OCI-LY7 (cell line): ENCODE measurements at regions of chr13 and their contacts with region 1.

Region 1: DNA sequence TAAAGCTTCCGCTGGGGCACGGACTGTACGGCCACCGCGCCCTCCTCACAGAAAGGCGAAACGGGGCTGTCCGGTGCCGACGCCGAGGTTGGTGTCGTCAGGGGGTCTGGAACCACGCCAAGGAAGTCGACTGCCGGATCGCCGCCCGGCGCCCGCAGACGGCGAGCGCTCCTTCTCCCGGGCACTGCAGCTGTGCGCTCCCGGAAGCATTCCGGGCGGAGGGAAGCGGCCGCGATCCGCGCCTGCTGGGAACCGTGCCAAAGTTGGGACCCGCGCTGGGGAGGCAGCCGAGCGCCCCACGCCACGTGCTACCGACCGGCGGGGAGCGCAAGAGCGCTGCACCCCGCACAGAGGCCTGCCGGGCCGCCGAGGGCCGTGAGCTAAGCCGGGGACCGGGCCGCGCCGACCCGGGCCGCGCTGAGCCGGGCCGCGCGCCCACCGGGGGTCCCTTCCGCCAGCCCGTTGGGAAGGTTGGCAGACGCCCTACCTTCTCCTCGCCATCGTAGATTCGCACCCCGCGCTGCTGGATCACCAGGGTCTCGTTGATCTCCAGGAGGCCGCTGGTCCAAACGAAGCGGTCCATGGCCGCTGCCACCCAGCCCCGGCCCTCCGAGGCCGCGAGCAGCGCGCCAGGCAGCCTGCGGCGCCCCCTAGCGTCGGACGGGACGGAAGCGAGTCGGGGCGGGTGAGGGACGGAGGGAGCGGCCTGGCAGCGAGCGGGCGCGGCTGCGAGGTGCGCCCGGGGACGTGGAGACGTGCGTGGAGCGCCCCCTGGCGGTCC is at the start of gene VPS36:
- DNase-seq: peak; percentile 95
- H3K4me3 ChIP-seq: peak within 1 kb of the TSS; percentile 75
- H3K27ac ChIP-seq: peak within 1 kb of the TSS; percentile 34
- H3K4me1 ChIP-seq: peaks cover 28% of the 10 kb centered on the region
- CTCF ChIP-seq: peak; percentile 91
- total RNA-seq, gene VPS36: 26.5 and 35.9 TPM in 2 replicates

Region 2: DNA sequence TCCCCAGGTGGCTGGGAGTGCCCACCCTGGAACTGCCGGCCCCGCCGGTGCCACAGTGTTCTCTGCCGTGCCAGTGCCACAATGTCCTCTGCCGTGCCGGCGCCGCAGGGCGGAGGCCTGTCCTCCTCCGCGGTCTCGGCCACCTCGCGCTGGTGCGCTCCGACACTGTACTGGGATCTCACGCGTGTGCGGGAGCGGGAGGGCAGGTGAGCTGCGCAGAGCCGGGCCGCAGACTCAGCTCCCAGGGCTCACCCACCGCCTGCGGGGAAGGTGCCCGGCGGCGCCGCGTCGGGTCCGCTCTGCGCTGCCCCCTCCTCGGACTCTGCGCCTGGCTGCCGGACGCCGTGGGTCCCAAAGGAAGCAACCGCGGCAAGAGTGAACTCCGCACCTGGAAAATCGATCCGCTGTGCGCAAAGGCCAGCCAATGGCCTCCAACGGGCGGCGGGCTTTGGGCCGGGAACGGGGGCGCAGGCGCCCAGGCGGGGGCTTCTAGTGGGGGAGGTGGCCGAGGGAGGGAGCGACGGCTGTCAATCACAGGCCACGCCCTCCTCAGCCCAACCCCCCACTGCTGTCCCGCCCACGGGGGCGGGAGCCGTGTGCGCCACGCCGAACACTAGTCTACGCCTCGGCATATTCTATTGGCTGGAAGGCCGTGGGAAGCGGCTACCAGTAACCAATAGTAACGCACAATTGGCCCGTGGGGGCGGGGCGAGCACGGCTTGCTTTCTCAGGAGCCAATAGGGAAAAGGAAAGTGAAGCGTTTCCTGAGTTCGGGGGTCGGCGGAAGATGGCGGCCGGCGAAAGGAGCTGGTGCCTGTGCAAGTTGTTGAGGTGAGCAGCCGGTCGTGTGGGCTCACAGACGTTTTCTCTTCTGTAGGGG is 438.3 kb before region 1 on chr13 and contains the start of gene ALG11:
- CTCF ChIA-PET with region 1: no interaction called
- POLR2A ChIA-PET with region 1: no interaction called
- intact Hi-C with region 1: loop called (anchors 2 kb)
- DNase-seq: peak; percentile 99
- H3K4me3 ChIP-seq: peak within 1 kb of the TSS; percentile 95
- H3K27ac ChIP-seq: no peak within 1 kb of the TSS
- H3K4me1 ChIP-seq: peaks cover 16% of the 10 kb centered on the region
- CTCF ChIP-seq: no peak
- total RNA-seq, gene ALG11: 11.6 and 14.1 TPM in 2 replicates

Region 3: DNA sequence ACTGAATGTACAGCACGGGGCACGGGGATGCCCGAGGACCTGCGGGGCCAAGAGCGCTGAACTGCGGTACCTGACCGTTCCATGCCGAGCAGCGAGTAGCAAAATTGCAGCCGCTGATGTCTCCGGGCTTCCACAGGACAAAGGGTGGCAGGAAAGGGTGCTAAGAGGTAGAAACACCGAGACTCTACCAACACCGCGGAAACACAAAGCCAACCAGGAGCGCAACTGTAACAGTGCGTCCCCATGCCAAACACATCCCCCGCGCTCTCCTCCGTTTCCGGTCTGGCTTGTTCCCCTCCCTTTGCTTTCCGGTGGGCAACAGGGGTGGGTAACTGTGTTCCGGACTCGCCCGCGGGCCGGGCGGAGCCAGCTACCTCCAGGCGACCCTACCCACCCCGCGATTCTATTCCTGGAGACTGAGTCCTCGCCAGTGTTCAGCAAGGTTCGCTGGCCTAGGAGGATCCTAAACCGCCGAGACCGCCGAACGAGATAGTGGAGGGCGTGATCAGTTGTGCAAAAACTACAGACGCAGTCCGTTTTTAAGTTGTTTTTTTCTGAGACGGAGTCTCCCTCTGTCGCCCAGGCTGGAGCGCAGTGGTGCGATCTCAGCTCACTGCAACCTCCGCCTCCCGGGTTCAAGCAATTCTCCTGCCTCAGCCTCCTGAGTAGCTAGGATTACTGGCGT is 255.9 kb before region 1 on chr13:
- CTCF ChIA-PET with region 1: no interaction called
- POLR2A ChIA-PET with region 1: no interaction called
- intact Hi-C with region 1: loop called (anchors 10 kb)
- DNase-seq: peak; percentile 89
- H3K4me3 ChIP-seq: peak overlapping the region; percentile 94
- H3K27ac ChIP-seq: peak overlapping the region; percentile 71
- H3K4me1 ChIP-seq: peaks cover 13% of the 10 kb centered on the region
- CTCF ChIP-seq: no peak

Region 4: GRCh38 chr13:52428295-52428694 is 21.9 kb before region 1 on chr13:
- CTCF ChIA-PET with region 1: no interaction called
- POLR2A ChIA-PET with region 1: no interaction called
- intact Hi-C with region 1: no loop called
- DNase-seq: no peak
- H3K4me3 ChIP-seq: no peak overlapping the region
- H3K27ac ChIP-seq: no peak overlapping the region
- H3K4me1 ChIP-seq: no peaks in the 10 kb centered on the region
- CTCF ChIP-seq: no peak

Region 5: DNA sequence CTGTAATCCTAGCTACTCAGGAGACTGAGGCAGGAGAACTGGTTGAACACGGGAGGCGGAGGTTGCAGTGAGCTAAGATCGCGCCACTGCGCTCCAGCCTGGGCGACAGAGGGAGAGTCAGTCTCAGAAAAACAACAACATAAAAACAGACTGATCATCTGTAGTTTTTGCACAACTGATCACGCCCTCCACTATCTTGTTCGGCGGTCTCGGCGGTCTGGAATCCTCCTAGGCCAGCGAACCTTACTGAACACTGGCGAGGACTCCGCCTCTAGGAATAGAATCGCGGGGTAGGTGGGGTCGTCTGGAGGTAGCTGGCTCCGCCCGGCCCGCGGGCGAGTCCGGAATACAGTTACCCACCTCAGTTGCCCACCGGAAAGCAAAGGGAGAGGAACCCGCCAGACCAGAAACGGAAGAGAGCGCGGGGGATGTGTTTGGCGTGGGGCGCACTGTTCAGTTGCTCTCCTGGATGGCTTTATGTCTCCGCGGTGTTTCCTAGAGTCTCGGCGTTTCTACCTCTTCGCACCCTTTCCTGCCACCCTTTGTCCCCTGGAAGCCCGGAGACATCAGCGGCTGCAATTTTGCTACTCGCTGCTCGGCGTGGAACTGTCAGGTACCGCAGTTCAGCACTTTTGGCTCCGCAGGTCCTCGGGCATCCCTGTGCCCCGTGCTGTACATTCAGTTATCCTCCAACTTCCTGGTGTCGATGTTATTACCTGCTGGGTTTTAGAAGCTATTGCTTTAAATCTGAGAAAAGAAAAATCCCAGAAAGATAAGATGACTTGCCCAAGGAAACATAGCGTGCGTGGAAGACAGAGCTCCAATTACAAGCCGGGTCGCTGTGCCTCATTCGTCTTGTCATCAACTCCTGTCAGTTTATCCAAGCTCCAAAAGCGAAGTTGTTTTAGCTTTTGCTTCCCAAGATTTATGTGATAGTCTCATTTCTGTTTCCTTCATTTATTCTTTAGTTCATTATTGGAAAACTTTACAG is 167.2 kb after region 1 on chr13:
- CTCF ChIA-PET with region 1: no interaction called
- POLR2A ChIA-PET with region 1: no interaction called
- intact Hi-C with region 1: loop called (anchors 5 kb)
- DNase-seq: peak; percentile 90
- H3K4me3 ChIP-seq: peak overlapping the region; percentile 76
- H3K27ac ChIP-seq: peak overlapping the region; percentile 45
- H3K4me1 ChIP-seq: peaks cover 25% of the 10 kb centered on the region
- CTCF ChIP-seq: no peak